ENCODE measurements at regions of chr10 and their contacts with region 1.

Region 1: GRCh38 chr10:71696628-71697326 is 22.8 kb downstream of the C10orf105 start:
- DNase-seq: no peak
- ATAC-seq: peak; percentile 56
- H3K4me3 ChIP-seq: no peak overlapping the region
- H3K27ac ChIP-seq: no peak overlapping the region
- H3K4me1 ChIP-seq: peaks cover 64% of the 10 kb centered on the region
- H3K27me3 ChIP-seq: no peaks in the 10 kb centered on the region
- CTCF ChIP-seq: peak; percentile 77 to 98 (median 96)
- EP300 ChIP-seq: no peak
- POLR2A ChIP-seq: no peak
- RAD21 ChIP-seq: peak; percentile 61

Region 2: DNA sequence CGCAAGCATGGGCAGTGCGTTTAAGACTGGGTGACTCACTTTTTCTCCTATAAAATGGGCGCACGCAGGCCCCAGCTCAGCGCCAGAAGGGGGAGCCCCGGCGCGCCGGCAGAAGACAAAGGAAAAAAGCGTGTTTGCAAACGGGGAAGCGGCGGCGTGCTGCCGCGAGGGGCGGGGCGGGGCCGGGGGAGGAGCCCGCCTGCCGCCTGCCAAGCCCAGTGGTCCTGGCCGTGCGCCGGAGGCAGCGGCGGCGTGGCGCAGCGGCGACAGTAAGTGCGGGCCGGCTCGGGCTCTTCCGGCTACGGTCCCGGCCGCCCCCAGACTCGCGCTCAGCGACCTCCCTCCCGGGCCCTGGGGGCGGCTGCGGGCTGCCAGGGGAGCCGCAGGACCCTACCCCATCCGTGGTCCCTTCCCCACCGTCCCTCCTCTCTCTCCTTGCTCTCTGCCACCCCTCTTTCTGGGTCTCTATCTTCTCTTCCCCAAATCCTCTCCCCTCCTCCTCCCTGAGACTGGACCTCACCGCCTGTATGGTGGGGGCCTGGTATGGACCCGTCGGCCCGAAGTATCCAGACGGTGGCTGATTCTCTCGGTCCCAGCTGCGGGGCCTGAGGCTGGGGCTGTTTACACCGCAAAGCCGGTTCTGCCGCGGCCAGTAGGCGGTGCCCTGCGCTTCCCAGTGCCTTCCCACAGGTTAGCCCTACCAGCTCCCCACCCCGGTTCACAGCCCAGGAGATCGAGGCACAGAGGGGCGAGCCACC is 377.6 kb before region 1 on chr10 and contains the start of gene SLC29A3:
- CTCF ChIA-PET with region 1: interaction called, 92 read pairs
- POLR2A ChIA-PET with region 1: no interaction called
- RAD21 ChIA-PET with region 1: interaction called, 20 read pairs
- SMC1A ChIA-PET with region 1: interaction called, 7 read pairs
- in situ Hi-C with region 1: loop called (anchors 5 kb)
- intact Hi-C with region 1: no loop called
- DNase-seq: no peak
- ATAC-seq: peak; percentile 96
- H3K4me3 ChIP-seq: peak within 1 kb of the TSS; percentile 82
- H3K27ac ChIP-seq: peak within 1 kb of the TSS; percentile 6; the same call in 1 of the 2 replicates
- H3K4me1 ChIP-seq: peaks cover 8% of the 10 kb centered on the region
- H3K27me3 ChIP-seq: no peaks in the 10 kb centered on the region
- CTCF ChIP-seq: peak; percentile 71 to 77 (median 73)
- EP300 ChIP-seq: no peak
- POLR2A ChIP-seq: peak; percentile 82
- RAD21 ChIP-seq: peak; percentile 66
- polyA plus RNA-seq, gene SLC29A3: 2.1 to 2.5 TPM

Region 3: GRCh38 chr10:71383972-71384687 is 312.6 kb before region 1 on chr10:
- CTCF ChIA-PET with region 1: interaction called, 30 read pairs
- POLR2A ChIA-PET with region 1: no interaction called
- RAD21 ChIA-PET with region 1: no interaction called
- SMC1A ChIA-PET with region 1: interaction called, 6 read pairs
- in situ Hi-C with region 1: loop called (anchors 10 kb)
- intact Hi-C with region 1: loop called (anchors 5 kb)
- DNase-seq: no peak
- ATAC-seq: peak; percentile 98
- H3K4me3 ChIP-seq: no peak overlapping the region
- H3K27ac ChIP-seq: no peak overlapping the region
- H3K4me1 ChIP-seq: no peaks in the 10 kb centered on the region
- H3K27me3 ChIP-seq: peaks cover 0 to 3% of the 10 kb centered on the region in 2 experiments; a peak in 1 of 4 replicates
- CTCF ChIP-seq: peak; percentile 95 to 97 (median 95)
- EP300 ChIP-seq: no peak
- POLR2A ChIP-seq: no peak
- RAD21 ChIP-seq: peak; percentile 86

Region 4: DNA sequence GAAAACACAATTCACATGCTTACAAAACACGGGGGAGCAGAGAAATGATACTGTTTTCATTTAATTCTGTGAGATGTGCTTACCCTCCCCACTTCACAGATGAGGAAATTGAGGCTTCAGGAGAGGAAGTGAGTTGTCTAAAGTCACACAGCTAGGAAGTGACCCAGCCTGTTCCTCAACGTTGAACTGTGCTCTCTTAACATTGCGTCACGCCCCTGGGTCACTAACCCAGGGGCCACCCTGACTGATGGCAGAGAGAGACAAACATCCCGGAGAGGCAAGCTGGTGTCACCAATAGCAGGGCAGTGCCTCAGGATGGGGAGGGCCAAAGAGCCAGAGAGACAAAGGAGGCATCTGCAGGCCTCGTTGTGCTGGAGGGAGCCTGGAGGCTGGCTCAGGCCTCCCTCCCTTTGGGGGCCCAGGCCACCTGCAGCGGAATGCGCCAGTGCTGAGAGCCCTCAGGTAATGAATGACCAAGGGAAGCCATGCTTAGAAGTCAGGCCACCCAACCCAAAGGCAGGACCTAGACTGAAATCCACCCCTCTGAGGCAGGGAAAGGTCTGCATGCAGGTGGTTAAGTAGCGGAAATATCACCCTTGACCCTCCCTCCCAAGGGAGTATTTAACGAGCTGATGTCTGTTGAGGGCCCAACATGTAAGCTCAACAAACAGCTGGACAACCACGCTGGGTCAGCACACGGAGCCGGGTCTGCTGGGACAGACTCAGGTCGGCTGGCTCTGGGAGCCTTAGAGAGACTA is 58.5 kb before region 1 on chr10:
- CTCF ChIA-PET with region 1: interaction called, 67 read pairs
- POLR2A ChIA-PET with region 1: no interaction called
- RAD21 ChIA-PET with region 1: interaction called, 31 read pairs
- SMC1A ChIA-PET with region 1: interaction called, 4 read pairs
- in situ Hi-C with region 1: no loop called
- intact Hi-C with region 1: loop called (anchors 5 kb)
- DNase-seq: no peak
- ATAC-seq: no peak; the same call in 2 of the 3 replicates
- H3K4me3 ChIP-seq: no peak overlapping the region
- H3K27ac ChIP-seq: no peak overlapping the region
- H3K4me1 ChIP-seq: peaks cover 3% of the 10 kb centered on the region
- H3K27me3 ChIP-seq: 0 out of 4 replicates have a peak, but pooled peaks cover 0 to 1% of the 10 kb centered on the region in 2 experiments
- CTCF ChIP-seq: no peak
- EP300 ChIP-seq: no peak
- POLR2A ChIP-seq: no peak
- RAD21 ChIP-seq: no peak

Region 5: GRCh38 chr10:71679425-71679824 is 17.4 kb before region 1 on chr10:
- CTCF ChIA-PET with region 1: interaction called, 33 read pairs
- POLR2A ChIA-PET with region 1: interaction called, 4 read pairs
- RAD21 ChIA-PET with region 1: interaction called, 14 read pairs
- SMC1A ChIA-PET with region 1: interaction called, 3 read pairs
- in situ Hi-C with region 1: no loop called
- intact Hi-C with region 1: no loop called
- DNase-seq: no peak
- ATAC-seq: no peak
- H3K4me3 ChIP-seq: no peak overlapping the region
- H3K27ac ChIP-seq: no peak overlapping the region
- H3K4me1 ChIP-seq: peaks cover 3% of the 10 kb centered on the region; the same call in 1 of the 2 replicates
- H3K27me3 ChIP-seq: no peaks in the 10 kb centered on the region
- CTCF ChIP-seq: no peak
- EP300 ChIP-seq: no peak
- POLR2A ChIP-seq: no peak
- RAD21 ChIP-seq: no peak

Region 6: DNA sequence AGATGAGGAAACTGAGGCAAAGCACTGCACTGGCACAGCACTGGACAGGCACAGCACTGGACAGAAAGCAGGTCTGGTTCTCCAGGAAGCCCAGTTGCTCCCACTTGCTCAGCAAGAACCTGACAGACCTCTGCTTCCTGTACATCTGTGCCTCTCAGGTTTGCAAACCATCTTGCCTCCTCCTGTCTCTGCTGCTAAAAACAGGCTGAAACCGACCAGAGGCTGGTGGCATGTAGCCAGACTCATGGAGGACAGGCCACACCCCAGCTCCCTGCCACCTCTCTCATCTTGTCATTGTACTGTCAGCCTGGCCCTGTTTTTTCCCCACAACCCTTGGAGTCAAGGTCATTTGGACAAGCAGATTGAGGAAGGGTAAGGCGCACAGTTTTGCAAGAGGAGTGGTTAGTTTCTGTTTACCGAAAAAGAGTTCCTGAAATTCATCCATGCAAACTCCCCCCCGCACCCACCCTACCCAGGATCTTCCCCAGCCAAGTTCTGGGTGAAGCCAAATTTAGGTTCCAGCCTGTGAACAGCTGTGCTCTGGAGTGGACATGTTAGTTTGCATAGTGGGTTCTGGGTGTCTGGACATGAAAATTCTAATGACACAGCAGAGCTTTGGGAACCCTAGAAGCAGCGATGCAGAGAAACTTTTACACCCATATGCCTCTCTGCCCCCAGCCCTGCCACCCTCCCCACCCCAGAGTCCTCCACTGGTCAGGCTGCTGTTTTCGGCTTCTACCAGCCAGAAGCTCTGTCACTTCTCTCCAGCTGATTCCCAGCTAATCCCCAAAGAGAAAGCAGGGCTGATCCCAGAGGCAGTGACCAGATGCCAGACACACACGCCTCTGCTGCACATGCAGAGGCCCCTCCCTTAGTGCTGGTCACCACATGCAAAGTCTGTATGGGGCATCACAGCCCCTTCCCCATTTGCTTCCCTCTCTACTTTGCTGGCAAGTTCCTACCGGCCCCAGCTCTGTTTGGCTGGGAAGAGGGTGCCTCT is 31.3 kb after region 1 on chr10:
- CTCF ChIA-PET with region 1: interaction called, 30 read pairs
- POLR2A ChIA-PET with region 1: no interaction called
- RAD21 ChIA-PET with region 1: interaction called, 11 read pairs
- SMC1A ChIA-PET with region 1: interaction called, 4 read pairs
- in situ Hi-C with region 1: no loop called
- intact Hi-C with region 1: loop called (anchors 1 kb)
- DNase-seq: peak; percentile 90
- ATAC-seq: peak; percentile 76
- H3K4me3 ChIP-seq: peak overlapping the region; percentile 13; the same call in 1 of the 2 replicates
- H3K27ac ChIP-seq: peak overlapping the region; percentile 81
- H3K4me1 ChIP-seq: peaks cover 48% of the 10 kb centered on the region
- H3K27me3 ChIP-seq: no peaks in the 10 kb centered on the region
- CTCF ChIP-seq: no peak
- EP300 ChIP-seq: no peak
- POLR2A ChIP-seq: peak; percentile 79
- RAD21 ChIP-seq: no peak